Activated CD4-positive, alpha-beta T cell treated with anti-CD3 and anti-CD28 coated beads, Interleukin-2, amount 10 ng/mL, durations not matched to agents 24 days and 14 days (primary cell): ENCODE measurements at regions of chr4 and their contacts with region 1.

Region 1: DNA sequence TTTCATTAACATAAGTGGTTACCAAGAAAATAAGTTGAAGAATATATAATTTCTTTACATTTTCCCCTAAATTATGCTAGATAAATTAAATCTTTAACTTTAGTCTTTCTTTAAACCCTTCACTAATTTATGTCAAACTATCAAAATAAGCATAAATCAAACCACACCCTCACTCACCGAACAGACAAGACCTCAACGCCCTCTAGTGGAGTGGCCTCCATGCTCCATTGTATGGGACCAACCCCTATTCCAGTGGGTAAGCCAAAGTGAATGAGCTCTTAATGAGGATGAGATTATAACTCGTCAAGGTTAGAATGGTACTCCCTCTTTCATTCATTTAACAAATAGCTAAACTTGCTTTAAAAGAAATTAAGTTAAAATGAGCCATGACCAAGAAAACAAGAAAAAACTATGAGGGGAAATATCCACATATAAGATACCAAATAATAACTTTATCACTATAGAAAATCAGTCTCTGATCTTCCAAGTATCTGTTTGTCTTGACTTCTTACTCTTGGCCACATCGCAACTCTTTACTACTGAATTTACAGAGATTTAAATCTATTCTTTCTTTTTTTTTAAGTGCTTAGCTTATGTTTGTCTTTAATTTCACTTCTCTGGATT is 15.6 kb upstream of the BBS12 start:
- DNase-seq: peak; percentile 92
- H3K4me3 Mint-ChIP-seq: no peak overlapping the region
- H3K27ac Mint-ChIP-seq: peak overlapping the region; percentile 36
- H3K4me1 Mint-ChIP-seq: peaks cover 28% of the 10 kb centered on the region
- H3K27me3 Mint-ChIP-seq: no peaks in the 10 kb centered on the region

Region 2: DNA sequence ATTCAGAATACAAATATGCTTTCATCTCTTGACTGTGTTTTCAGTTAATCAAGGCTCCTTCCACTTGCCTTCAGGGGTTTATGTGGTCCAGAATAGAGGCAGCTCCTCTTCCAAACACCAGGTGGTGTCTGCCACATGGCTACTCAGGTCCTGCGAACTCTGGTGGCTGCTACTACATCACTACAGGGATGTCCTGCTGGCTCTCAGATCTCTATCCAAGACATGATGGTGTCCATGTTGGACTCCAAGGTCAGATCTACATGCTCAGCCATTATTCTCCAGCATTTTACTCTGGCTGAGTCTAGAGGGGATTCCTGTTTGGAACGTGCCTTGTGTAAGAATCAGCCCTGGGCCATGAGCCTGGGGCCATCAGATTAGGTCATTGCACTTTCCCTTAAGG is 1439.3 kb before region 1 on chr4:
- intact Hi-C with region 1: no loop called
- DNase-seq: peak; percentile 50
- H3K4me3 Mint-ChIP-seq: no peak overlapping the region
- H3K27ac Mint-ChIP-seq: no peak overlapping the region
- H3K4me1 Mint-ChIP-seq: peaks cover 5% of the 10 kb centered on the region
- H3K27me3 Mint-ChIP-seq: peaks cover 28% of the 10 kb centered on the region

Region 3: DNA sequence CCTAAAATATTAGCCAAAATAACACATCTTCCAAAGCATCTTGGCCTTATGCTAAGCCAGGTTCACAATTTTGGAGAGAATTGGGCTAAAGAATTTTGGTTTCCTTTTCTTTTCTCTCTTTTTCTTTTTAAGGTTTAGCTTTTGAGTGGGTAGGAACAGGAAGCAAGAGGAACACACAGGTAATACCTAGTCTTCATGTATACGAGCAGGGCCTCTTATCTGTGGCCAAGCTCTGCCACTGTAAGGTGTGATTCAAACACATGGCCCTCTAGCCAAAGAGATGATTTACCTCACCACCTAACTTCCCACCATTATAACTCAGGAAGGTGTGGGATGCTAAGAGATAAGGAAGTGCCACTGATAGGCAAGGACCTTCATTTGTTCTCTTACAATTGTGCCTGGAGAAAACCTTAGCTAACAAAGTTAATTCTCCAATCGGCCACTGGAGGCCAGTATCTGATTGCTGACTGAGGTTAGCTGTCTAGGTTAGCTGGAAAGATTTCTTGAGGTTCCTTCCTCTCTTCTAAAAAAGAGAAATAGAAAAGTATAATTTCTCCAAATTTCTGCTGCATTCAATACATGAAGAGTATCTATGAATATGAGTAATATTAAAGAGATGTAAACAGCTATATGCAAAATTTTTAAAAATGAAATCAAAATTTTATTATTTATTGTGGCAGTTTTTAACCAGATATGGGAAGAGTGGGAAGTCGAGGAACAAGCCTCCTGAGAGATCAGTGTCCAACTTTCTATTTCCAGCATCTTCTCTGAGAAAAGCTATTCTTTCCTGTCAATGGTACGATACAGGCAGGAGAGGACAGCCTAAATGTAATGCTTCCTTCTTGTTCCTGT is 816.6 kb before region 1 on chr4:
- intact Hi-C with region 1: loop called (anchors 2 kb)
- DNase-seq: peak; percentile 86
- H3K4me3 Mint-ChIP-seq: no peak overlapping the region
- H3K27ac Mint-ChIP-seq: no peak overlapping the region
- H3K4me1 Mint-ChIP-seq: peaks cover 4% of the 10 kb centered on the region
- H3K27me3 Mint-ChIP-seq: peaks cover 3% of the 10 kb centered on the region

Region 4: DNA sequence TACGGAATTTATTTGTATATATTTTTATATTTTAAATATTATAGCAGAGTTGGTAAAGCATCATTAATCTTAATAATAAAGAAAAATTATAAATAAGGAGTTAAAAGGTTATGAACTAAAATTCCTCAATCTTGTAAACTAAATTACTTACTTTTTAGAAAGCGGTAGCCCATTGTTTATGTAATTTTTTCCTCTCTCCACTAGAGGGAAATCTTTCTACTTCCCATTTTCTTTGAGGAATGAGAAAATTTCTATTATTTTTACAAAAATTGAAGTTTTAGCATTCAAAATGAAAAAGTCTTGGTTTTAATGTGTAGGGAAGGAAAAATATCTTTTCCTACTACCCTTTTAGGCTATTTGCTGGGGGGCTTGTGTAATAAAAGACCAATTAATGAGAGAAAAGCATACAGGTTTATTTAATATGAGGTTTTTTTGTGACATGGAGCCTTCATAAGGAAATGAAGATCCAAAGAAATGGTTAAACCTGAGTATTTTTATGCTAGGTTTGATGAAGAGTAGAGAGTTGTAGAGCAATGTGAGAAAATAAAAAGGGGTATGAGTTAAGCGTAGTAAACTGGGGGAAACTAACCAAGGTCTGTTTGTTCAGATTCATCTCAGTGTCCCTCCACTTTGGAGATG is 406.8 kb before region 1 on chr4:
- intact Hi-C with region 1: loop called (anchors 10 kb)
- DNase-seq: no peak
- H3K4me3 Mint-ChIP-seq: no peak overlapping the region
- H3K27ac Mint-ChIP-seq: no peak overlapping the region
- H3K4me1 Mint-ChIP-seq: peaks cover 8% of the 10 kb centered on the region
- H3K27me3 Mint-ChIP-seq: no peaks in the 10 kb centered on the region

Region 5: DNA sequence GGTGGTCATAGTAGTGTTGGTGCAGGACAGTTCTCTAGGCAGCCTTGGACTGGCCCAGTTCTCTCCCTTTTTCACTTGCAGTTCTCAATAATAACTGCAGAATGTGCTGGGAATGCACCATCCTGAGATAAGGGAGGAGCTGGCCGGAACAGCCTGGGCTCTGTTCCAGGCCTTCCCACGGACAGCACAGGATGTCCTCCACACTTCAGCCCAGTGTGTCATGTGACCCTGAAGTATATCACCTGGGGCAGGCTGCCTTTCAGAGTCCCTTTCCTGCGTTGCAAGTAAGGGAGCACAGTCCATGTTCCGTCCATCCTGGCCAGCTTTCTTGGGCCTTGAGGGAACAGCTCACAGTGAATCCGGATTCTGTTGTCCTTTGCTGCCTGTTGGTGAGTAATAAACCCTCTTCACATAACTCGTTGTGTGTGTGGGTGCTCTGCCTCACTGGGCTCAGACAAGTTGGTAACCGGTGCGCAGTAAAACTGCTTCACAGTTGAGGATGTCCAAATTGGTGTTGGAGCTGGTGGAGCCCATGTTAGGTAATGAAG is 16.7 kb before region 1 on chr4:
- intact Hi-C with region 1: loop called (anchors 2 kb)
- DNase-seq: no peak
- H3K4me3 Mint-ChIP-seq: peak overlapping the region; percentile 76
- H3K27ac Mint-ChIP-seq: peak overlapping the region; percentile 94
- H3K4me1 Mint-ChIP-seq: peaks cover 55% of the 10 kb centered on the region
- H3K27me3 Mint-ChIP-seq: no peaks in the 10 kb centered on the region

Region 6: DNA sequence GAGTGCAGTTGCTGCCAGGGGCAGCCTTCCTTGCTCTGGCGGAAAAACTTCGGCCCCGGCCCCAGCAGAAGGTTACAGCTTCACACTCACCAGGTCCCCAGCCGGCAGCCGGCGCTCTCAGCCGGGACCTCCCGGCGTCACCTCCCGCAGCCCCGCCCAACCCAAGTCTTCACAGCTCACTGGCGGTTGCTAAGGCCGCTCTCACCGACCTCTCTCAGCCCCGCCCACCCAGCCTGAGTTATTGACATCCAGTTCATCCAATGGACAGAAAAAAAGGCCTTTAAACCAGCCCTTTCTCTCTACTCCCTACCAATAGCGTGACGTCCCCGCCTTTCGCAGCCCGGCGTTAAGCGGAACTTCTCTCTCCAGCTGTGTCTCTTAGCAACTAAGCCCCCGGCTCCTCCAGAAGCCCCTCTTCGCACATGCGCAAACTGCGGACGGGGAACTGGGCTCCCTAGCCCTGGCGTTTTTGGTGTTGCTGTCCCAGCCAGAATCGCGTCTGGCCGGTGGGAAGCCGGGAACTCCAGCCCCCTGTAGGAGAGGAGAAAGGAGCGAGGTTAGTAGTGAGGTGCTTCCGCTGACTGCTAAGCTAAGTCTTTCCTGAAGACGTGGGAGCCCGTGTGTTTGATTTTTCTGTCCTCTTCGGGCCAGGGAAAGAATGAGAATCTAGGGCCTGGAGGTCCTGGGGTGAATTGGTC is 15.5 kb after region 1 on chr4 and contains the start of gene BBS12:
- intact Hi-C with region 1: loop called (anchors 2 kb)
- DNase-seq: peak; percentile 100
- H3K4me3 Mint-ChIP-seq: peak within 1 kb of the TSS; percentile 94
- H3K27ac Mint-ChIP-seq: peak within 1 kb of the TSS; percentile 96
- H3K4me1 Mint-ChIP-seq: peaks cover 25% of the 10 kb centered on the region
- H3K27me3 Mint-ChIP-seq: no peaks in the 10 kb centered on the region
- total RNA-seq, gene BBS12: 3.8 and 4.7 TPM in 2 replicates

Region 7: GRCh38 chr4:122772311-122772710 is 55.4 kb after region 1 on chr4:
- intact Hi-C with region 1: no loop called
- DNase-seq: no peak
- H3K4me3 Mint-ChIP-seq: no peak overlapping the region
- H3K27ac Mint-ChIP-seq: no peak overlapping the region
- H3K4me1 Mint-ChIP-seq: no peaks in the 10 kb centered on the region
- H3K27me3 Mint-ChIP-seq: no peaks in the 10 kb centered on the region

Region 8: GRCh38 chr4:122783301-122784215 is 66.6 kb after region 1 on chr4:
- intact Hi-C with region 1: no loop called
- DNase-seq: peak; percentile 52
- H3K4me3 Mint-ChIP-seq: no peak overlapping the region
- H3K27ac Mint-ChIP-seq: no peak overlapping the region
- H3K4me1 Mint-ChIP-seq: peaks cover 23% of the 10 kb centered on the region
- H3K27me3 Mint-ChIP-seq: no peaks in the 10 kb centered on the region